GM10248 (cell line): ENCODE measurements at regions of chrX and their contacts with region 1.

Region 1: DNA sequence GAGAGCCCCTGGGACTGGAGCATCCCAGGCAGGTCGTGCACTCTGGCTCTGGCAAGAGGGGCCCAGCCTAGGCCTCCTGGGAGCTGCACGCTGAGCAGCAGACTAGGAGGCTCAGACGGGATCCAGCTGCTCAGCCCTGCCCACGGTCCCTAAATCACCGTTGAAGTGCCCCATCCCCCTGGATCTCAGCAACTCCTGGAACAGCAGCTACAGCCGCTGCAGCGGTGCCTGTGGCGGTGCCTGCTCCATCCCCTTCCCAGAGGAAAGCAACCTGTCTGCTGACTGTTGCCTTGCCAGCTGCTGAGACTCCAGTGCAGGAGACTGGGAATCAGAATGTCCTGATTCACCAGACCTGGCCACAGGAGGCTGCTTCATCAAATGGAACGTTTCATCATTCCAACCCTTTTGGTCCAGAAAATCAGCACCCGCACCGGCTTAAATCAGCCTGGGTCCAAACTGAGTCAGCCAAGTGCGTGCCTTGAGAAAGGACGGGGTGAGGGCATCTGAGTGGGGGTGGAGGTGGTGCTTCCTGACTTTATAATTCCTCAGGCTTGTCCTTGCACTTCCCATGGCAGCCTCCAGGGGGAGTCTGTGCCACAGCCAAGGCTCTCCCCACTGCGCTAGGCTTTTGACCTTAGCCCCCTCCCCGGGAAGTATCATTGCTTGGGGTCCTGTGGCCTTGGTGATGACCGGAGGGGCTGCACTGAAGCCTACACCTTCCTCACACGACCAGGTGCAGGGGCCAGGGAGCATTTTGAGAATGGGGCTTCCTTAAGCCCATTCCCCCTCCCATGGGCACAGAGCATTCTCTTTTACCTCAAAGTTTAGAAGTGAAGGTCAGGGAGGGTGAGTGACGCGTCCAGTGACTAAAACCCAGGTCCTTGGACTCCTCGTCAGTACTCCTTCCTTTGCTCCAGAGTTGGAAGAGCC is 6.5 kb downstream of the ZNF185 start:
- DNase-seq: peak; percentile 72
- CTCF ChIP-seq: peak; percentile 55

Region 2: DNA sequence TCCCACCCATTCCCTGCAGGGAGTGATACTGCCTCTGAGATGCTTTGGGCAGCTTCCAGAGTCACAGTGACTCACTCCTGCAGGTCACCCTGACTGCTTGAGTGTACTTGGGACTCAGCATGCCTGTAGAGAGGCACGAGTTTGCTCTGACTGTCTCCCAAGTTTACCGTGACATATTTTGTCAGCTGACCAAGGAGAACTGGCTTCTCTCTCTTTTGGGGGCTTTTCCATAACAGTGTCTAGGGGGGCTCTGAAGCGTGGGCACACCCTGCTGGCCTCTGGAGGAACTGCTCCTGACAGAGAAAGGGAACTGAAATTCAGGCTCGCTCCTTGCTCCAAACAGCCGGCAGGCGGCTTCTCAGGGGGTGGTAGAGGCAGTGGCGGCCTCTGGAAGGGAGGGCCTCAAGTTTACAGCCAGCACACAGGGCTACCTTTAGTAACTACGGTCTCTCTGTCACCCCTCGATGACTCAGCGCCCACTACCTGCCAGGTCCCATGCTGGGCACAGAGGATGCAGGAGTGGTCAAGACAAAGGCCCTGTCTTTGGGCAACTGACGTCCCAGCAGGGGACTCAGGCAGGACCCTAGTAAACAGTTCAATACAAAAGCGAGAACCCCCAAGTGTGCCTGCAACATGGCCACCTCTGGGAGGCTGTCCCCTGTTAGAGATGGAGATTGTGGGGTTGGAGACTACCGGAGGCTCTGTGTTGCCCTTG is 11.3 kb after region 1 on chrX:
- CTCF ChIA-PET with region 1: interaction called, 10 read pairs
- POLR2A ChIA-PET with region 1: no interaction called
- DNase-seq: peak; percentile 75
- CTCF ChIP-seq: peak; percentile 45

Region 3: GRCh38 chrX:152926279-152926678 is 21.9 kb after region 1 on chrX:
- CTCF ChIA-PET with region 1: interaction called, 14 read pairs
- POLR2A ChIA-PET with region 1: no interaction called
- DNase-seq: peak; percentile 65
- CTCF ChIP-seq: peak; percentile 31

Region 4: DNA sequence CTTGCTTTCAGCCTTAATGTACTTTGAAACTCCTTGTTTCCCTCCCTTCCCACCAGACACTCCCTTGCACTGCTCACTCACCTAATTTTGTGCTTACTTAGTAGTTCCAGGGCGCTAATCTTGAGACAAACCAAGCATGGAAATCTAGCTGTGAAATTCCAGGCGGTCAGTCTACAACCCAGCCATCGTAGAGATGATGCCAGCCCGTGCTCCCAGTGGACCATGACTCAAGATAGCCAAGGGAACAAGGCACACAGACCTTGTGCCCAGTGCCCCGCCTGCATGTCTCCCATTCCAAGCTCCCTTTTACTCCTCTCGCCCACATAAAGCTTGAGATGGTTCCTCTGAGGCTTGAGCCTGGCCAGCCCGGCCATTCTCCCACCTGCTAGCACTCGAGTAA is 530.4 kb after region 1 on chrX:
- CTCF ChIA-PET with region 1: no interaction called
- POLR2A ChIA-PET with region 1: no interaction called
- DNase-seq: no peak
- CTCF ChIP-seq: no peak